Activated naive CD4-positive, alpha-beta T cell treated with anti-CD3 and anti-CD28 coated beads for 36 hours (primary cell): ENCODE measurements at regions of chr21 and their contacts with region 1.

Region 1: GRCh38 chr21:34946916-34947534 is 102.1 kb downstream of the RUNX1 start:
- DNase-seq: peak; percentile 44
- H3K4me3 Mint-ChIP-seq: no peak overlapping the region
- H3K27ac Mint-ChIP-seq: peak overlapping the region; percentile 87
- H3K4me1 Mint-ChIP-seq: peaks cover 92% of the 10 kb centered on the region
- H3K27me3 Mint-ChIP-seq: no peaks in the 10 kb centered on the region

Region 2: DNA sequence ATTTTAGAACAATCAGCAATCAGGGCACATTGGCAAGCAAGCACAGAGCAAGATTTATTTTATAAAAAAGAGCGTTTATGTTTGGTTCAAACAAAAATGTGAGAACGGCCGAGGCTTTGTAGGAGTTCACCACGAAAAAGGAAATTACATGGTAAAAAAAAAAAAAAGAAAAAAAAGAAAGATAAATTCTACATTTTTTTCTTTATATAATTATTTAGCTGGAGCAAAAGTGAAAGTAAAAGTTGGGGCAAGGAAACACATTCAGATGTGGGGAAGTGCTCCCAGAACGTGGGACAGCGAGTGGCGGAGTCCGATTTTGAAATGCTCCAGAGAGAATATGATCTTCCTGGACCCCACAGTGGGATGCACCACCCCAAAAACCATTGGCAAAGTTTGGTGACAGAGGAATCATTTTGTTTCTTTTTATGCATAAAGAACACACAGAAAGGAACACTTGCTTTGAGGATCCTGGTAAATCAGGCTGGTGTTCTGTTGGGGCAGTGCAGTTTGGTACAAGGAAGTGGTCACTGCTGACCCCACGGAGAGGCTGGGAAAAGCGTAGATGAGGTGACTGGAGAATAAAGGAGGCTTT is 1015.1 kb before region 1 on chr21:
- CTCF ChIA-PET with region 1: no interaction called
- intact Hi-C with region 1: loop called (anchors 10 kb)
- DNase-seq: no peak
- H3K4me3 Mint-ChIP-seq: peak overlapping the region; percentile 93
- H3K27ac Mint-ChIP-seq: peak overlapping the region; percentile 99
- H3K4me1 Mint-ChIP-seq: peaks cover 43% of the 10 kb centered on the region
- H3K27me3 Mint-ChIP-seq: no peaks in the 10 kb centered on the region

Region 3: DNA sequence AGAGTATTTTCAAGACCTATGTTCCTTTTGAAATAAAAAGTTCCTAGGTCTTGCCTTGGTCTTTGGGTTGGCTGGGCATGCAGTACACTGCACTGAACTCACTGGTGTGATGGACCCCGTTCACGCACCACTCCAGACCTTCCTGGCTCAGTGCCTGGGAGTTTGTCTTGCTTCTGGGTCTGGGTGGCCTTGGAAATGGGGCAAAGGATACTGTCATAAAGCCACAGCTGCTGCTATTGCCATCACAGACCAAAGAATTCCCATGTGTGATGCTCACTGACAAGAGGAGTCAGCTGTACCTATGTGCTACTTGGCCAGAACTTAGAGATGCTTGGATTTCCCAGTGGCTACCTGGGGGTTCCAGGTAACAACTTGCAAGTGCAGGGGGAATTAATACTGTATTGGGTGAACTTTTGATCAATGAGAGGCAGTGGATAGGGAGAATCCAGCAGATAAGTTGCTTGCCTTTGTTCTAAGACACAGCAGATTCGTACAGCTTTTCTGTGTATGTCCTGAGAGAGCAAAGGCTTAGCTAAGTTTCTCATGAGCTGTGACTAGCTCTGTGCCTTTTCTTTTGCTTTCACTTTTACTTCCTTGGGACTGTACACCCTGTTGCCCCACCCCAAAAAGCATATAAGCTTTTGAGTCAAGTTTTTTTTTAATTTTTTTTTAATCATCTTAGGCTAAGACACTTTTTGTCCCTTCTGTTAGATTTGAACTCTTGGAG is 13.3 kb before region 1 on chr21:
- CTCF ChIA-PET with region 1: interaction called, 4 read pairs
- intact Hi-C with region 1: loop called (anchors 1 kb)
- DNase-seq: peak; percentile 51
- H3K4me3 Mint-ChIP-seq: peak overlapping the region; percentile 77
- H3K27ac Mint-ChIP-seq: peak overlapping the region; percentile 97
- H3K4me1 Mint-ChIP-seq: peaks cover 80% of the 10 kb centered on the region
- H3K27me3 Mint-ChIP-seq: no peaks in the 10 kb centered on the region

Region 4: DNA sequence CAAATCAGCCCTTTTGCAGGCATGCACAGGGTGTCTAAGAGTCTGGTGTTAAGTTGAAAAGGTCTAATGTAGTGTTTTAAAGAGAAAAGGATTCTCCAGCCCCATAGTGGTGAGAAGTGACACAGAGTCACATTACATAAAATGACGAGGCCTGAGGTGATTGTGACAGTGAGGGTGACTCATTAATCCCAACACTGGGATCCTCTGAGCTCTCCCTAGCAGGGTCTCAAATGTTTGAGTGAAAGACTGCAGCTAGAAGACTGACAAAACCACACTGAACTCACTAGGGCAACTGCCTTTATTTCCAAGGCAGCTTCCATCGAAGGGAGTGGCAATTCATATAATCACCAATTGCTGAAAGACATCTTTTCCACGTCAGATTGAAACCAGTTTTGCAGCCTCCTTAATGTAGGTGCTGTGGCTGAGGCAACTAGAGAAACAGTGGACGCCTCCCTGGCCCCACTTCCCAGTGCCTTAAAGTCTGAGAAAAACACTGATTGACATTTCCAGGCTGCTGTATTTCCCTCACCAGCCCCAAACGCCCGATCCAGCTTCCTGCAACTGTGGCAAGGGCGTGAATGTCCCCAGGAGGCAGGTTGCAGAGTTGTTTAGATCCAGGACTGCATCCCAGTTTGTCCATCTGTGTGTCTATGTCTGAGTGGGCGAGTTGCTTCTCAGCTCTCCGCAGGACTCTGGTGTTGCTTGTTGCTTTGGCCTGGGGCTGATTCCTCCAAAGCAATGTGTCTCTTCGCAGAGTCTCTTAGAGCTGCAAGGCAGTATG is 20.7 kb after region 1 on chr21:
- CTCF ChIA-PET with region 1: interaction called, 20 read pairs
- intact Hi-C with region 1: loop called (anchors 1 kb)
- DNase-seq: peak; percentile 73
- H3K4me3 Mint-ChIP-seq: peak overlapping the region; percentile 47
- H3K27ac Mint-ChIP-seq: peak overlapping the region; percentile 93
- H3K4me1 Mint-ChIP-seq: peaks cover 84% of the 10 kb centered on the region
- H3K27me3 Mint-ChIP-seq: no peaks in the 10 kb centered on the region

Region 5: DNA sequence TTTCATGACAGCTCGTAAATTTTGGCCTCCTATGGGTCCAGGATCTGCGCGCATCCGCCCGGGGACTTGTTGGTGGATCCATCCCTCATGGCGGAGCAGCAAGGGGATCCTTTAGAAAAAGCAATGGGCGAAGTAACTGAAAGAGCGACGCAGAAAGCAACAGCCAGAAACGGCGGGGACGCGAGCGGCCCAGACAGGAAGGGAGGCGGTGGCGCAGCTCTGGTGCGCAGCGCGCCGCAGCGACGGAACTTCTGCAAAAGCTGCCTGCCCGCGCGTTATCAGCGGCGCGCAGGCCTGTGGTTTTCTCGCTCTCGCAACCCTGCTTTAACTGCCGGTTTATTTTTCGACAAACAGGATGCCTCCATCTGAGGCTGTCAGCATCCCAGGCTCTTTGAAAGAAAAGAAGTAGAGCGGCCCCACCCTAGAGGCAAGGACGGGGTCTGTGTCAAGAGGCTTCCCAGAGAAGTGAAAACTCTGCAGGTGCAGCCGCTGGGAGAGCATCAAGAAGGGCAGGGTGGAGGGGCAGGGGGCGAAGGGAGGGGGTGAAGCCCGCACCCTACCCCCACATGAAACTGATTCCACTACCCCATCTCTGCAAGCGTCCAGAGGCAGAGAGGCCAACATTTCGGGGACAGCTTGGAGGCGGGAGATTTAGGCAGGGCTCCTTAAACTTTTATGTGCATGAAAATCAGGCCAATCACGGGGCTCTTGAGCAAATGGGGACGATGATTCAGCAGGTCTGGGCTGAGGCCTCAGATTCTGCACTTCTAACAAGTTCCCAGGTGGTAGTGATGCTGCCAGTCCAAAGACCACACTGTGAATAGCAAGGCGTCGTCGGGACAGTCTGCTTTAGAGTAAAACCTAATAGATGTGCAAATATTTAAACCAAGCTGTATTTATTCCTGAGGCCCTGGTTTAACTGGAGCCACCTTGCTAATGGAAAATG is 79.9 kb after region 1 on chr21:
- CTCF ChIA-PET with region 1: interaction called, 7 read pairs
- intact Hi-C with region 1: loop called (anchors 2 kb)
- DNase-seq: peak; percentile 88
- H3K4me3 Mint-ChIP-seq: peak overlapping the region; percentile 83
- H3K27ac Mint-ChIP-seq: peak overlapping the region; percentile 95
- H3K4me1 Mint-ChIP-seq: peaks cover 86% of the 10 kb centered on the region
- H3K27me3 Mint-ChIP-seq: no peaks in the 10 kb centered on the region

Region 6: GRCh38 chr21:35045542-35046262 is 98.7 kb after region 1 on chr21:
- CTCF ChIA-PET with region 1: interaction called, 4 read pairs
- intact Hi-C with region 1: loop called (anchors 1 kb)
- DNase-seq: peak; percentile 59
- H3K4me3 Mint-ChIP-seq: peak overlapping the region; percentile 86
- H3K27ac Mint-ChIP-seq: peak overlapping the region; percentile 97
- H3K4me1 Mint-ChIP-seq: peaks cover 81% of the 10 kb centered on the region
- H3K27me3 Mint-ChIP-seq: no peaks in the 10 kb centered on the region